Posterior cingulate gyrus (tissue), 11 donors: ENCODE measurements at regions of chr2 and their contacts with region 1.

Region 1: DNA sequence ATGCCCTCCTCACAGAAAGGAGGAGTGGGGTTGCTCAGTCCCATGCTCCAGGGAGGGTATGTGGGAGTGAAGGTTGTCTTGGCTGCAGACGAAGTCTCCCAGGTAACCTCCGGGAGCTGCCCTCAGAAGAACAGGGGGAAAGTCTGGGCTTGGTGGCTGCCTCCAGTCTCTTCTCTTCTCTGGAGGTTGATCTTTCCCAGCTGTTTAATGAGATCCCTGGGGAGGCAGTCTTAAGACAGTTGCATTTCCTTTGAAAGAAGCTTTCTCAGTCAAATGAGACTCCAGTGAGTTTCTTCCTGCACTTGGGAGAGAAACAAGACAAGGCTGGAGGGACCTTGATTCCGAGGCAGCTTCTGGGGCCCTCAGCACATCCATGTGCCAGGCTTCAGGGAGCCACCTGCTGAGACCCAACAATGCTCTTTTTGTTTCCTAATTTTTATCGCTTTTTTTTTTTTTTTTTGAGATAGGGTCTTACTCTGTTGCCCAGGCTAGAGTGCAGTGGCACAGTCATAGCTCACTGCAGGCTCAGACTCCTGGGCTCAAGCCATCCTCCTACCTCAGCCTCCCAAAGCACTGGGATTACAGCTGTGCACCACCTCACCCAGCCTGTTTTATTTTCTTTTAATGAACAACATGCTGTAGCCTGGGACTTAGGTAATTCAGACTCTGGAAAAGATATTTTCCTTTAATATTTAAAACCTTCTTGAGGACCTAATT is 71.7 kb upstream of the TPO start:
- DNase-seq: no peak

Region 2: GRCh38 chr2:1366546-1367134 is 25.1 kb after region 1 on chr2:
- intact Hi-C with region 1: loop called (anchors 2 kb)
- DNase-seq: peak; percentile 67 to 98 (median 84)